Pancreas (tissue), 10 donors: ENCODE measurements at regions of chr4 and their contacts with region 1.

Region 1: GRCh38 chr4:25767877-25768725 is 94.7 kb downstream of the SEL1L3 start:
- DNase-seq: peak in 1 of 6 donors; percentile 35
- ATAC-seq: peak; percentile 56 to 88 (median 84)
- H3K4me3 ChIP-seq: no peak overlapping the region
- H3K27ac ChIP-seq: no peak overlapping the region
- H3K4me1 ChIP-seq: no peaks in the 10 kb centered on the region
- H3K27me3 ChIP-seq: no peaks in the 10 kb centered on the region
- CTCF ChIP-seq: peak in 3 of 4 donors; percentile 36 to 41 (median 39)

Region 2: DNA sequence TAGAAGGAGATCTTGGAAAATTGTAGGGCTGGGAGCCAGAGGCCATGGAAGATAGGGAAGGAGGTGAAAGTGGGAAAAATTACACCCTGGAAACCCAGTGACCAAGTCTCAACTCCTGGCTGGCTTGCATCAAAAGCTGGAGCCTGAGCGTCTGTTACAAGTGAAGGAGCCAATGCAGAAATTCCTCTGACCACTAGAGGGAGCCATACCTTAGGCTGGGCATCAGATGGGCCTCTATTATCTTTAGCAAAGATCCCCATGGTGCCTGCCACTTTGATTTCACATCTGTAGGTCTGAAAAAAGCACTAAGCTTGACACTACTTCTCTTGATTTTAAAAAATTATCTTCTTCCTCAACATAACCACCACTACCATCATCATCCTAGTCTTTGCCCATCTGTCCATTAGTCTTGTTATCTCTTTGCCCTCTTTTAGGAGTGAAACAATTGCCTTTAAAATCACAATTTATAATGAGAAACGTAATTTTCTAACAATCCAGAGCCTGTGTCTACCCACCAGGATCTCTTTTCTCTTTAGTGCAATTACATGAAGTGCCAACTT is 328.1 kb before region 1 on chr4:
- intact Hi-C with region 1: loop called in 1 of 3 experiments (anchors 10 kb)
- DNase-seq: peak in 4 of 6 donors; percentile 28 to 66 (median 41)
- ATAC-seq: peak; percentile 77 to 92 (median 85)
- H3K4me3 ChIP-seq: no peak overlapping the region
- H3K27ac ChIP-seq: peak overlapping the region in 2 of 4 donors; percentile 21 to 42
- H3K4me1 ChIP-seq: peaks cover 0 to 9% (median 0%) of the 10 kb centered on the region in 3 donors
- H3K27me3 ChIP-seq: no peaks in the 10 kb centered on the region
- CTCF ChIP-seq: peak; percentile 79 to 95 (median 86)

Region 3: DNA sequence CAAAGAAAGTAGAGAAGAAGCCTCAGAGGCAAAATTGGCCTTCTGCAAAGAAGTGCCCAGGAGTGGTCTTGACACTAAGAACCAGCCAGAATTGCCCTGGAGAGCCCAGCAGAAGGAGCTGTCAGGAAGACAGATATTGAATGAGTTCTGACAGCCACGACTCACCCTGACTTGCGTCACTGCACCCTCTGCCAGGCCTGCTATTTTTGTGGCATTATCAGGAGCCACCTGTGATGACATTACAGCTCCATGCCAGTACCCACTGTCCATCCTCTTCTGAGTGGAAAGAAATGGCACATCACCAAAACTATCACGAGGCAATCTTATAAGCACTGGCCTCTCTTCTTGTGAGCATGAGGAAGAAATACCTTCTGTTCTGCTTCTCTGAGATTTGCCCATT is 213.6 kb after region 1 on chr4:
- intact Hi-C with region 1: no loop called
- DNase-seq: no peak
- ATAC-seq: no peak
- H3K4me3 ChIP-seq: no peak overlapping the region
- H3K27ac ChIP-seq: no peak overlapping the region
- H3K4me1 ChIP-seq: no peaks in the 10 kb centered on the region
- H3K27me3 ChIP-seq: no peaks in the 10 kb centered on the region
- CTCF ChIP-seq: no peak